ENCODE measurements at regions of chr1 and their contacts with region 1.

Region 1: DNA sequence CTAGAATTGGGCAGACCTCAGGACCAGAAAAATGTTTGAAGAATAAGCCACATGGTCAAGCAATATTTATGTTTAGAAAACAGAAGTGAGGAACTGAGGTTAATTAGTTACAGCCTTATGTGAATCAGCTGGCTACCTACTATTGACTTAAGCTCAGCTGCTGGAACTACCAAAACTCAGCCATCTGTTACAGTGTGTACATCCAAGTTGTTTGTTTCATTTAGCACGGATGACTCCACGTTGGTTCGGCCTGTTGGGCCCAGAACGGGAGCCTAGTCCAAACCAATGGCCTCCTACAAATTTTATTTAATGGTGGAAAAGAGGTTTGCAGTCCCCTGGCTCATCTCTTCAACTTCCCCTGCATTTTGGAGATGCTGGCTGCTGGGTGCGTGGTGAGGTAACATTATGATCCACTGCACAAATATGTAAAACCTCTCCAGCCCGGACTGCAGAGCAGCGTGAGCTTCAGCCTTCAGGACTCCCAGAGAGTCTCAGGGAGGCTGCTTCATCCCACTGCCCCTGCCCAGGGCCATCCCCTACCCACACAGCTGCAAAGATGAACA is 143.4 kb downstream of the ZZZ3 start:
- DNase-seq: no peak
- ATAC-seq: peak; percentile 22; the same call in 1 of the 2 replicates
- H3K4me3 ChIP-seq: no peak overlapping the region
- H3K27ac ChIP-seq: no peak overlapping the region
- H3K4me1 ChIP-seq: peaks cover 30 to 67% of the 10 kb centered on the region in 2 experiments
- H3K27me3 ChIP-seq: no peaks in the 10 kb centered on the region
- CTCF ChIP-seq: no peak
- POLR2A ChIP-seq: no peak
- RAD21 ChIP-seq: no peak

Region 2: GRCh38 chr1:77322061-77322900 is 216.8 kb before region 1 on chr1:
- CTCF ChIA-PET with region 1: no interaction called
- POLR2A ChIA-PET with region 1: no interaction called
- RAD21 ChIA-PET with region 1: no interaction called
- intact Hi-C with region 1: loop called (anchors 5 kb)
- DNase-seq: peak; percentile 51
- ATAC-seq: peak; percentile 87
- H3K4me3 ChIP-seq: 0 out of 4 replicates have a peak overlapping the region, but pooled peaks of 1 of the 2 experiments have one; percentile 10
- H3K27ac ChIP-seq: peak overlapping the region; percentile 63; the same call in 1 of the 2 replicates
- H3K4me1 ChIP-seq: peaks cover 12 to 20% of the 10 kb centered on the region in 2 experiments
- H3K27me3 ChIP-seq: no peaks in the 10 kb centered on the region
- CTCF ChIP-seq: no peak
- POLR2A ChIP-seq: no peak
- RAD21 ChIP-seq: peak; percentile 2; the same call in 1 of the 2 replicates

Region 3: DNA sequence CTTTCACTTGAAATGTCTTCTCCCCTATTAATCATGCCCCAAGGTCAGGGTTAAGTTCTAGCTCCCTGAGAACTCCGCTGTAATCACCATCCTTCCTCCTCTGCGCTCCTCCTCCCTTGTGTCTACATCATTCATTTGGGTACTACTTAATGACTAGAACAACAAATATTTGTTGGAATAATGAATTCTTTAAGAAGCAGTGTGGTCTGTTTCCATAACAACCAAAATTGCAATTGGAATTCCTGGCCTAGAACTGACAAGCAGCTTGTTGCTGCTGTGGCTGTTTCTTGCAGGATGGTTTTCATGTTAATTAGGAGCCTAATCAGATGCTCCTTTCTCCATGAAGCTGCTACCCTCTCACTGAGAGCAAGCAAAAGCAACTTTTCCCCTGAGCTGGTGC is 49.1 kb before region 1 on chr1:
- CTCF ChIA-PET with region 1: no interaction called
- POLR2A ChIA-PET with region 1: no interaction called
- RAD21 ChIA-PET with region 1: no interaction called
- intact Hi-C with region 1: no loop called
- DNase-seq: no peak
- ATAC-seq: no peak
- H3K4me3 ChIP-seq: no peak overlapping the region
- H3K27ac ChIP-seq: no peak overlapping the region
- H3K4me1 ChIP-seq: no peaks in the 10 kb centered on the region
- H3K27me3 ChIP-seq: no peaks in the 10 kb centered on the region
- CTCF ChIP-seq: no peak
- POLR2A ChIP-seq: no peak
- RAD21 ChIP-seq: no peak

Measured in HCT116 (cell line).